GM18951 (cell line): ENCODE measurements at regions of chr20 and their contacts with region 1.

Region 1: GRCh38 chr20:31822421-31823330 is 3.5 kb downstream of the MYLK2 start:
- POLR2A ChIP-seq: no peak

Region 2: DNA sequence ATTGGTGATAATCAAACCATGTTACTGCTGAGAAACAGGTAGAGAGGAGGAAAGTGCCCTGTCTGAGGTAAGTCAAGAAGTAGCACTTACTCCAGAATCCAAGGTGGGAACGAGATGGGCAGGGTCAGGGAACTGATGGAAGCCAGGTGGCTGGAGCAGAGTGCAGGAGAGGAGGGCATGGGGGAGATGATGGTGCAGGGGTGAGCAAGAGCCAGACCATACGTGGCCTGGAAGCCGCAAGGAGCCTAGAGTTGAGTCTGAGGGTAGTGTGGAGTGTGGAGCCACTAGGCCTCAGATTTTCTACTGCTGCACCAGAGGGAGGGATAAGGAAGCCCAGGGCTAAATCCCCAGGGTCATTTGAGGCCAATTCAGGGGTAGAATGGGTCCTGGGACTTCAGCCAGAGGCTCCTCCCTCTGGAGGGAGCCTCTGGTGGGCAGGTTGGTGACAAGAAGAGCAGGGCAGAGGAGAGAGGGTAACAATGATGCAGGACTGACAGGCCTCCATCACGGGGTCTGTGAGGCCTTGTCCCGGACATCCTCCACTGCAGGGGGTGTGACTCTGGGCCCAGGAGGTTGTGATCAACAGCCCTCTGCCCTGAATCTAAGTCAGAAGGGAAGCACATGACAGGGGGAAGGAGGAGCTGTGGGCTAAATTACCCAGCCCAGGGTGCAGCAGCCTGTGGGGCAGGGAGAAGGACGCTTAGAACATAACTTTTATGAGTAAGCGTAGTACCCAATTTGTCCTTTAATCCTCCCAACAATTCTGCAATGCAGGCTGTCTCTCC is 156.2 kb before region 1 on chr20:
- in situ Hi-C with region 1: no loop called
- POLR2A ChIP-seq: no peak

Region 3: DNA sequence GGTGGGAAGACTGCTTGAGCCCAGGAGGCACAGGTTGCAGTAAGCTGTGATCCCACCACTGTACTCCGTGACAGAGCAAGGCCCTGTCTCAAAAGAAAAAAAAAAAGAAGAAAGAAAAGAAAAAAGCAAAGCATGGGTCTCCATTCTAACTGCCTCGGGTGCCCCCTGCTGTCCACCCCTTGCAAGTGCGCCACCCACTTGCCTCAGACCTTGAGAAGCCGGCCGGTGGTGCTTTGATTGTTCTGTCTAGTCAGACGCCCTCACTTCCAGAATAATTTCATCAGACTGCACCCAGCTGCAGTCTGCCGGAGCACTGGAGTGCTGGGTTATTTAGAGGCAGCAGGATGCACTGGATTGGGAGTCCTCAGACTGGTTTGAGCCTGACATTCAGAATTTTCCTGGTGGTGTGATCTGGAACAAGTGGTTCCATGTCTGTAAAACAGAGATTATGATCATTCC is 269.2 kb after region 1 on chr20:
- in situ Hi-C with region 1: loop called (anchors 10 kb)
- POLR2A ChIP-seq: no peak